Mammary epithelial cell (primary cell): ENCODE measurements at regions of chr18 and their contacts with region 1.

Region 1: GRCh38 chr18:7038330-7038851 is 79.2 kb downstream of the LAMA1 start:
- DNase-seq: peak; percentile 99
- H3K4me3 ChIP-seq: peak overlapping the region in 1 of 3 experiments; percentile 21
- H3K27ac ChIP-seq: peak overlapping the region; percentile 75
- H3K4me1 ChIP-seq: peaks cover 25% of the 10 kb centered on the region
- H3K27me3 ChIP-seq: no peaks in the 10 kb centered on the region
- CTCF ChIP-seq: peak; percentile 80 to 91

Region 2: GRCh38 chr18:6683112-6683876 is 355.1 kb before region 1 on chr18:
- CTCF ChIA-PET with region 1: no interaction called
- dilution Hi-C with region 1: no loop called
- in situ Hi-C with region 1: no loop called
- intact Hi-C with region 1: no loop called
- DNase-seq: no peak
- H3K4me3 ChIP-seq: no peak overlapping the region
- H3K27ac ChIP-seq: no peak overlapping the region
- H3K4me1 ChIP-seq: no peaks in the 10 kb centered on the region
- H3K27me3 ChIP-seq: no peaks in the 10 kb centered on the region
- CTCF ChIP-seq: no peak

Region 3: DNA sequence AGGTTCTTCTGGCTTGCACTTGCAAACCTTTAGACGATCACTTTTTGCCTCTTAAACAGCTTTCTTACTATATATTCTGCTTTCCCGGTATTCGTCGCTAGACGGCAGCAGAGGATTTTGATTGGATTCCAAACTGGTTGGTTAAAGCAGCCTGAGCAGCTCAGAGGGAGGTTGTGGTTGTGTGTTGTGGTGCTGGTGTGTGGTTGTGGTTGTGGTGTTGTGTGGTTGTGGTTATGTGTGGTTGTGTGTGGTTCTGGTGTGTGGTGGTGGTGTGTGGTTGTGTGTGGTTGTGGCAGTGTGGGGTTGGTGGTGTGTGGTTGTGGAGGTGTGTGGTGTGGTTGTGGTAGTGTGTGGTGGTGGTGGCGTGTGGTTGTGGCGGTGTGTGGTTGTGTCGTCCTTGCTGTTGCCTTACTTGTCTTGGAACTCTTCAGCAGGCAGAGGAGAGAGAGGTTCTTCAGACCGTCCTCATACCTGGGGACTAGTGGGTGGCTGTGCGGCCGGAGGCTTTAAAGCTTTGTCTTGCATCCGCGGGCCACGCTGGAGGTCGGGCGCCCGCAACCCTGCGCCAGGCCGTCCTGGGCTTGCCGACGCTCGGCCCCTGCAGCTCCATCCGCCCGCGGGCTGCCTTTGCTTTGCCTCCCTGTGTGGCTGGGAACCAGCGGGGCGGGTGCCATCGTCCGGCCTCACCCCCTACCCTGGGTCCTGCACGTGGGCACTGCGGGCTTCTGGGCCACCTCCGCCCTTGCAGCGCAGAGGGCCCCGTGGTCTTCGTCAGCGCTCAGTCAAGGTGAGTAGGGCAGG is 118.1 kb before region 1 on chr18:
- CTCF ChIA-PET with region 1: interaction called, 9 read pairs
- dilution Hi-C with region 1: no loop called
- in situ Hi-C with region 1: no loop called
- intact Hi-C with region 1: loop called (anchors 1 kb)
- DNase-seq: peak; percentile 64
- H3K4me3 ChIP-seq: no peak overlapping the region
- H3K27ac ChIP-seq: no peak overlapping the region
- H3K4me1 ChIP-seq: no peaks in the 10 kb centered on the region
- H3K27me3 ChIP-seq: no peaks in the 10 kb centered on the region
- CTCF ChIP-seq: peak; percentile 96 to 97

Region 4: DNA sequence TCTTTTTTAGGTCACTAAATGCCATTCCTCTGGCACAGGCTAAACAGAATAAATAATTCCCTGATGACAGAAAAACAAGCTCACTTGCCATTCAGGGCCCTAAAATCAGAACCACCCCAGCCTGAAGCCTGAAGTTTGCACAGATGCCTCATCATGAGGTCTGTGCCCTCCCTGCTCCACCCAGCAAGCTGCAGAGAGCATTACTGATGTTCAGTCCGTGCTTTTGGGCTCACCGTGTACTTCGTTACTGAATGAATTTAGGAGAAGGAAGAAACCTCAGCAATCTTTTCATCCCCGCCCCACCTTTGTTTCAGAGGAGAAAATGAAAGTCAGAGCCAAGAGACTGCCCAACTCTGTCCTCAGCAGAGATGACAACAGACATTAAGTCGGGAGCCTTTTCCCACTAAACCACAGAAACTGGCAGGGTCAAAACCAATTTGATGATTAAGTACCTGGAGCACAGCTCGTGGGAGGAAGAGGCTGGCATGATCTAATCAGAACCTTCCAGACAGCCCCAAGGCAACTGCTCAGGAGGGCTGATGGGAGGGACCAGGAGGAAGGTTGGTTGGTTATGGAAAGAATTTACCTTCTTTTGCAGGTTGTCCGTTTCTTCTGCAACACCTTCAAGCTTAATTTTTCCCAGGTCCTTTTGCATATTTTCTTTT is 43.5 kb before region 1 on chr18:
- CTCF ChIA-PET with region 1: interaction called, 3 read pairs
- dilution Hi-C with region 1: no loop called
- in situ Hi-C with region 1: no loop called
- intact Hi-C with region 1: loop called (anchors 1 kb)
- DNase-seq: peak; percentile 99
- H3K4me3 ChIP-seq: peak overlapping the region in 2 of 3 experiments; percentile 0 to 30
- H3K27ac ChIP-seq: peak overlapping the region; percentile 93
- H3K4me1 ChIP-seq: peaks cover 18% of the 10 kb centered on the region
- H3K27me3 ChIP-seq: no peaks in the 10 kb centered on the region
- CTCF ChIP-seq: no peak

Region 5: DNA sequence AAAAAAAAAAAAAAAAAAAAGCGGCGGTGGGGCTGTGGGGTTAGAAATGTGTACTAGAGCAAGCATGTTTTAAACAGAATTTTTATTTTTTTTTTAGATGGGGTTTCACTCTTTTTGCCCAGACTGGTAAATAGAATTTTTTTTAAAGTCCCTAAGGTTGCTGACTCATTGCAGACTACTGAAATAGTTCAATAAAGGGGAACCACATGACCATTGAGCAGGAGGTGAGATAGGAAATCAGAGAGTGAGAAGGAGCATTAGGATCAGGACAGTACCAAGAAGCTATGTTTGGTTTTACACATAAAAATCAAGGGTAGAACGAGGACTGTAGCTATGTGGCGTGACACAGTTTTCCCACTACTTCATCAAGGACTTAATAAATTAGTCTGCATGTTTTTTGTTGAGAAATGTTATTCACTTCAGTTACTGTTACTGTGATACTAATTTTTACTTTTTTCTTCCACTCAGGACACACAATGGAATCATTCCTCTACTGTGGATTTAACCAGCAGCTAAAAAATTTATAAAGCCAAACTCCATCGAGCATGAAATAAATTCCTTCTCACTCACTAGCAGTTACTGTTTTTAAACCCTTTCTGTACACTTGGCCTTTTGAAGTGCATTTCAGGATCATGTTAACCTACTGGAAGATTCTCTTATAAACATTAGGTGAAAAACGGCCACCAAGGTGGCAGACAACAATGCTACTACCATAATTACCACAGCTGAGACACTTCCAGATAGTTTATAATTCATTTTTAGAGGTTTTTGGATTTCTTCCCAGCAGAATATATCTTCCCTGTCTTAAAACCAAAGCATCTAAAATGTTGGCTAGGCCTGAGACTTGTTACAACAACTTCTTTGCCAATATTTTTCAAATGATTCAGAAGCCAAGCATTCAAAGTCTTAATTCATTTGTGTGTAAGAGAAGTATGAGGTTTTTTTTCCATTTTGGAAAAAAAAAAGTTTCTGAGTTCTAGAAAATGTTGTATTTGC is 46.0 kb after region 1 on chr18:
- CTCF ChIA-PET with region 1: no interaction called
- dilution Hi-C with region 1: no loop called
- in situ Hi-C with region 1: no loop called
- intact Hi-C with region 1: loop called (anchors 1 kb)
- DNase-seq: peak; percentile 69
- H3K4me3 ChIP-seq: peak overlapping the region in 1 of 3 experiments; percentile 26
- H3K27ac ChIP-seq: peak overlapping the region; percentile 94
- H3K4me1 ChIP-seq: peaks cover 7% of the 10 kb centered on the region
- H3K27me3 ChIP-seq: no peaks in the 10 kb centered on the region
- CTCF ChIP-seq: no peak

Region 6: GRCh38 chr18:7117390-7118355 is 79.3 kb after region 1 on chr18 and contains the start of gene LAMA1:
- CTCF ChIA-PET with region 1: no interaction called
- dilution Hi-C with region 1: no loop called
- in situ Hi-C with region 1: no loop called
- intact Hi-C with region 1: loop called (anchors 1 kb)
- DNase-seq: no peak
- H3K4me3 ChIP-seq: peak within 1 kb of the TSS; percentile 74 to 92 (median 83)
- H3K27ac ChIP-seq: no peak within 1 kb of the TSS
- H3K4me1 ChIP-seq: peaks cover 5% of the 10 kb centered on the region
- H3K27me3 ChIP-seq: no peaks in the 10 kb centered on the region
- CTCF ChIP-seq: peak in 1 of 2 donors; percentile 1
- total RNA-seq, gene LAMA1: 48.4 to 104 TPM

Region 7: DNA sequence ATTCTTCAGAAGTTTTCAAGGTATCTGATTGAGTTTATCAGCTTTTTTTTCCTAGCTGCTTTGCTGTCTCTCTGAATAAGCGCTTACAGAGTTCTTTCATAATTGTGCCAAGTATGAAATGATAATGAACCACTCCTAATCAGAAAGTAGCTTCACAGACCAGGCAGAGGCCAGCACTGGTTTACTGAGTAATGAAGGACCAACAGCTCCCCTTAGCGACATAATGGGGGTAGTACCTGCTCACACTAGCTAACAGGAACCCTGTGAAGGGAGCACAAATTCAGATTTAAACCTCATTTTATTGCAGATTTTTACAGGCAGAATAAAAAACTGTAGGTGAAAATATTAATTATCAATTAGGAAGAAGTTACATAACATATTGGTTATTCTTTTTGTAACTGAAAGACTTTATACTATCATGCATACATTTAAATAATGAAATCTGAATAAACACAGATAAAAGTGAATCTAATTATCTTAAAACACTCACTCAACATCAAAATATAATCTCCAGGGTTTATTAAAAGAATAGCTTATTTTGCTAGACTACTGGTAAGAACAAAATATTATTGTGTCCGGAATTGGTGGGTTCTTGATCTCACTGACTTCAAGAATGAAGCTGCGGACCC is 138.8 kb after region 1 on chr18:
- CTCF ChIA-PET with region 1: interaction called, 13 read pairs
- dilution Hi-C with region 1: no loop called
- in situ Hi-C with region 1: loop called (anchors 5 to 10 kb)
- intact Hi-C with region 1: loop called (anchors 1 kb)
- DNase-seq: peak; percentile 72
- H3K4me3 ChIP-seq: no peak overlapping the region
- H3K27ac ChIP-seq: no peak overlapping the region
- H3K4me1 ChIP-seq: no peaks in the 10 kb centered on the region
- H3K27me3 ChIP-seq: no peaks in the 10 kb centered on the region
- CTCF ChIP-seq: peak; percentile 87 to 91